ENCODE measurements at regions of chr14 and their contacts with region 1.

Region 1: GRCh38 chr14:80996049-80996901 is 40.9 kb downstream of the TSHR start:
- DNase-seq: peak; percentile 31
- H3K4me3 Mint-ChIP-seq: no peak overlapping the region
- H3K27ac Mint-ChIP-seq: no peak overlapping the region
- H3K4me1 Mint-ChIP-seq: no peaks in the 10 kb centered on the region
- H3K27me3 Mint-ChIP-seq: peaks cover 56% of the 10 kb centered on the region
- CTCF ChIP-seq: peak; percentile 16

Region 2: DNA sequence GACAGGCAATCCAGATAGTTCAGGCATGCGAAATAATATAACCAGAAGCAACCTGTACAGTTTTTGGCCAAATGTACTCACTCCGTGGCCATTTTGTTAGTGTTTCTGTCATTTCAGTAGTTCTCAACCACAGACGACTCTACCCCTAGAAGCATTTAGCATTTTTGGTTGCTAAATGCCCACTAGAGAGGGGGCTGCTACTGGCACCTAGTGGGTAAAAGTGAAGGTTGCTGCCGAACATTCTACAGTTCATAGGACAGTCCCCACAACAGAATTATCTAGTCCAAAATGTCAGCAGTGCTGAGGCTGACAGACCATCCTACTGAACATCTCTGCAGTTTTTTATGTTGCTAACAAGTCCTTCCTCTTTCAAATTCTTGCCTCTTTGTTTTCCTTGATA is 66.5 kb after region 1 on chr14:
- CTCF ChIA-PET with region 1: no interaction called
- intact Hi-C with region 1: loop called (anchors 5 kb)
- DNase-seq: peak; percentile 12
- H3K4me3 Mint-ChIP-seq: no peak overlapping the region
- H3K27ac Mint-ChIP-seq: no peak overlapping the region
- H3K4me1 Mint-ChIP-seq: no peaks in the 10 kb centered on the region
- H3K27me3 Mint-ChIP-seq: no peaks in the 10 kb centered on the region
- CTCF ChIP-seq: peak; percentile 20

Region 3: GRCh38 chr14:81164167-81164774 is 168.0 kb after region 1 on chr14:
- CTCF ChIA-PET with region 1: interaction called, 12 read pairs
- intact Hi-C with region 1: loop called (anchors 1 kb)
- DNase-seq: peak; percentile 74
- H3K4me3 Mint-ChIP-seq: no peak overlapping the region
- H3K27ac Mint-ChIP-seq: no peak overlapping the region
- H3K4me1 Mint-ChIP-seq: peaks cover 16% of the 10 kb centered on the region
- H3K27me3 Mint-ChIP-seq: no peaks in the 10 kb centered on the region
- CTCF ChIP-seq: peak; percentile 60

Region 4: GRCh38 chr14:81170104-81170828 is 174.0 kb after region 1 on chr14:
- CTCF ChIA-PET with region 1: interaction called, 14 read pairs
- intact Hi-C with region 1: no loop called
- DNase-seq: peak; percentile 78
- H3K4me3 Mint-ChIP-seq: peak overlapping the region; percentile 87
- H3K27ac Mint-ChIP-seq: peak overlapping the region; percentile 47
- H3K4me1 Mint-ChIP-seq: peaks cover 8% of the 10 kb centered on the region
- H3K27me3 Mint-ChIP-seq: no peaks in the 10 kb centered on the region
- CTCF ChIP-seq: peak; percentile 72

Region 5: DNA sequence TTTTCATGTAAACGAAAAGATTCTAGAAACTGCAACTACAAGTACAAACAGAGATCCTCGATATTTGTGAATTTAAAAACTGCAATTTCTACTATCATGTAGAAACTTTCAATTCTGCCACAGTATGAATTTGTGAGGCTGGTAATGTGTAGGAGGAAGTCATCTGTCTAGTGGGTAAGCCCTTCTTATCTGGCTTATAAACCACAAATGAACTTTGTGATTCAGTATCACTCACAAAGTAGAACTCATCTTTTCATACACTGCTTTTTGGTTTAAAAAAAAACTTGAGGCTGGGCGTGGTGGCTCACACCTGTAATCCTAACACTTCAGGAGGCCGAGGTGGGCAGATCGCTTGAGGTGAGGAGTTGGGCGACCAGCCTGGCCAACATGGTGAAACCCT is 203.8 kb after region 1 on chr14:
- CTCF ChIA-PET with region 1: no interaction called
- intact Hi-C with region 1: no loop called
- DNase-seq: no peak
- H3K4me3 Mint-ChIP-seq: no peak overlapping the region
- H3K27ac Mint-ChIP-seq: no peak overlapping the region
- H3K4me1 Mint-ChIP-seq: peaks cover 10% of the 10 kb centered on the region
- H3K27me3 Mint-ChIP-seq: no peaks in the 10 kb centered on the region
- CTCF ChIP-seq: no peak

Region 6: GRCh38 chr14:81211844-81212243 is 215.6 kb after region 1 on chr14:
- CTCF ChIA-PET with region 1: no interaction called
- intact Hi-C with region 1: loop called (anchors 1 kb)
- DNase-seq: peak; percentile 17
- H3K4me3 Mint-ChIP-seq: no peak overlapping the region
- H3K27ac Mint-ChIP-seq: no peak overlapping the region
- H3K4me1 Mint-ChIP-seq: no peaks in the 10 kb centered on the region
- H3K27me3 Mint-ChIP-seq: no peaks in the 10 kb centered on the region
- CTCF ChIP-seq: no peak

Region 7: DNA sequence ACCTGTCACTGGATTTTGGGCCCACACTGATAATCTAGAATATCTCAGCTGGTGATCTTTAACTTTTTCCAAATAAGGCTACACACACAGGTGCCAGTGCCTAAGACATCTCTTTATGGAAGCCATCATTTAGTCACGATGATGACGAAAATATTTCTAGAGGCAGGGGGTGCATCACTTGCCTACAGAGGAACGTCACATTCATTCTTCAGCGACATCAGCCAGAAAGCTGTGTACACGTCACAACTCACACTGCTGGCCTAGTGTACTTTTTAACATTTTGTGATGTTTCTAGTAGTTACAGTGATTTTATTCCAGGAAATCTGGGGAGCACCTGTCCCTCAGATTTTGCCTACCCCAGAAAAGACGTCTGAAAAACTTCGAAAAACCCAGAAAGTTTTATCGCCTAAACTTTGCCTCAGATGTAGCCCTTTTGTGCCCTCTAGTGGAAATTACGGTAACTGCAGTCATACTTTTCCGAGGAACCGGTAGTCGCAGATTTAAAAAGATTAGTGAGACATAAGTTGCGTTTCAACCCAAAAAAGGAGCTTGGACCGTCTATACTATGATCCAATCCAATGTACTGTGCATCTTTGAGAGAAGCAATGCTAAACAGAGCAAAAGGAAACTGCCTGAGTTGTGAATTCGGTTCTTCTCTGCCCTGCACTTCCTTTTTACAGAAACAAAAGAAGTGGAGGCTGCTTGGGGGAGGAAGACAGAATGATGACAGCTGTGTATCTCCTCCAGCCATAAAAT is 468.1 kb after region 1 on chr14:
- CTCF ChIA-PET with region 1: no interaction called
- intact Hi-C with region 1: loop called (anchors 1 kb)
- DNase-seq: peak; percentile 65
- H3K4me3 Mint-ChIP-seq: peak overlapping the region; percentile 10
- H3K27ac Mint-ChIP-seq: no peak overlapping the region
- H3K4me1 Mint-ChIP-seq: no peaks in the 10 kb centered on the region
- H3K27me3 Mint-ChIP-seq: no peaks in the 10 kb centered on the region
- CTCF ChIP-seq: peak; percentile 28

Region 8: GRCh38 chr14:81594012-81594411 is 597.7 kb after region 1 on chr14:
- CTCF ChIA-PET with region 1: no interaction called
- intact Hi-C with region 1: no loop called
- DNase-seq: no peak
- H3K4me3 Mint-ChIP-seq: no peak overlapping the region
- H3K27ac Mint-ChIP-seq: no peak overlapping the region
- H3K4me1 Mint-ChIP-seq: no peaks in the 10 kb centered on the region
- H3K27me3 Mint-ChIP-seq: peaks cover 10% of the 10 kb centered on the region
- CTCF ChIP-seq: no peak

Measured in Calu3 (cell line).